ENCODE measurements at regions of chr12 and their contacts with region 1.

Region 1: DNA sequence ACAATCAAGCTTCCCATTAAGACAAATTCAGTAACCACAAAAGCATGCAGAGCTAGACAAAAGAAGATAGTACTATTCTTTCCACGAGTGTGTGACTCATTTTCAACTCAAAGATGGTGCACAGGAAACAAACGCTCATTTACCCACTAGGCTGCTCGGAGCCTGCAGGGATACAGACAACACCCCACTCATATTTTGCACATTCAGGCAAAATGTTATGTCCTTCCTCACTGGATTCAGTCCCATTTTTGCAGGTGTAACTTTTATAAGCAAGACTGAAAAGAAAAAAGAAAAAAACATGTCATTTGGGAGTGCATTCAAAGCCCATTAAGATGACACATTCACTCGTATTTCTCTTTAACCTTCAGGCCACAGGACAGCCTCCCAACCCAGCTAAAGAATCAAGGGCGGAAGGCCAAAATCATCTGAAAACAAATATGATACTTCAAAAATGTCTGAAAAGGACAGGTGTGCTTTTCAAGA is 147.5 kb upstream of the KRR1 start:
- DNase-seq: peak in 1 of 2 experiments; percentile 31
- H3K4me3 ChIP-seq: no peak overlapping the region
- H3K27ac ChIP-seq: no peak overlapping the region
- H3K4me1 ChIP-seq: peaks cover 28% of the 10 kb centered on the region
- H3K27me3 ChIP-seq: no peaks in the 10 kb centered on the region
- CTCF ChIP-seq: no peak

Region 2: DNA sequence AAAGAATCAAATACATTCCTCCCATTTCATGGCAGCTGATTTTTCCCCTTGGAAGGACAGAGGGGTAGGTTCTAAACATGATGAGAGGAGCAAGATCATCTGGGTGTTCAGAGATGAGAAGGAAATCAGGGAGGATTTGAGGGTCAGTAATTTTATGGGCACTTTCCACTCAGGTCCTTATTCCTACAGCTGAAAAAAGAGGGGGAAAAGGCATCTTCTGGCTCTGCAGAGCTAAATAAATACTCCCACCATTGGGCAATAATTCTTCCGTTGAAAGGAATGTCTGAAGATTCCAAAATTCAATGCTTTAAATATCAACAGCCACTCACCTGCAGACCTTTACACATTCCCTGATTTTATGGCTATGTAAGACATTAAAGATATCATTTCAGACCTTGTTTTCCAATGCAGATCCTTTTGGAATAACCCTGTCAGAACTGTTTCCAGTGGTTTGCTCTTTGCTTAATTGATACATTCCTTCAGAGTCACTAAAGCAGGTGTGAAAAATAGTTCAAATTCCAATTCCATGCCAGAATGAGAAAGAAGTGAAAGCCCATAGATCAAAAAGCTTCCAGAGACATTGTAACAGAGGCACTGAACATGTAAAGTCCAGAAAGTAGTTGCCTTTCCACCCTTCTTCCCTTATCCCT is 85.8 kb after region 1 on chr12:
- CTCF ChIA-PET with region 1: no interaction called
- POLR2A ChIA-PET with region 1: interaction called, 10 read pairs
- intact Hi-C with region 1: no loop called
- DNase-seq: peak in 1 of 2 experiments; percentile 45
- H3K4me3 ChIP-seq: no peak overlapping the region
- H3K27ac ChIP-seq: no peak overlapping the region
- H3K4me1 ChIP-seq: no peaks in the 10 kb centered on the region
- H3K27me3 ChIP-seq: no peaks in the 10 kb centered on the region
- CTCF ChIP-seq: no peak

Region 3: DNA sequence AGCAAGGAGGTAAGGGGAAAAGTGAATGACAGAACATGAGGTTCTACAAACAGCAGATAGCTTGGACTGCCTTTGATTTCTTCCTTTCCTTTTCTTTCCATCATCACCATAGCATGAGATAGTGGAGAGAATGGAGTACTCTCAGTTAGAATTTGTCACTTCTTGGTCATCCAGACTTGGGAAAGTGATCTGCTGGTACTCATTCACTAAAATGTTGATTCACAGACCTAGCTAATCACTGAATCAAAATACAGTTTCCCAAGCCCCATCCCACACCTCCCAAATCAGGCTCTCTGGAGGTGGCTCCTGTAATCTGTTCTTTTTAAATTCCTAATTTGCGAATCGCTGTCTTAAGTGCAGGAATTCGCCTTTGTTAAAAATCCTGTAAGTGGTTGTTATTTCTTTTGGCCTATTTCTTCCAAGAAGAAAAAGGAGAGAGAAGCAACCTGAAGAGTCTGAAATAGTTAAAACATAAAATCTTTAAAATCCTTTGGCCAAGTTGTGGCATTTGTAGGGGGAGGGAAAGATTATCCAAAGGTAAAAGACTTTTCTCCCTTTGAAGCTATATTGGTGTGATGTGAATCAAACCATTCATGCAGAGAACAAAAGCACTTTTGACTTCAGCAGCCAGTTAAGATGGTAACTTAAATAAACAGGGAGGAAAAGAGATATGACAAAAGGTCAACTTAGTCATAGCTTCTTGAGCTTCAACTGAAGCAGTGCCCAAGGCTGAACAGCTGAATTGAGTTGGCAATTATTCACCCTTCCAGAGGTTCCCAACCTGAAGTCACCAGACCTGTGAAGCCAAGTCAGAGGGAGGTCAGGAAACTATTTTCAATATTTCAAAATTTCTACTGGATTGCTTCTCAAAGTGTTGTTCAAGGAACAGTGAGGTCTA is 107.6 kb after region 1 on chr12:
- CTCF ChIA-PET with region 1: no interaction called
- POLR2A ChIA-PET with region 1: no interaction called
- intact Hi-C with region 1: loop called (anchors 2 kb)
- DNase-seq: peak; percentile 40 to 93
- H3K4me3 ChIP-seq: no peak overlapping the region
- H3K27ac ChIP-seq: peak overlapping the region; percentile 72
- H3K4me1 ChIP-seq: peaks cover 36% of the 10 kb centered on the region
- H3K27me3 ChIP-seq: no peaks in the 10 kb centered on the region
- CTCF ChIP-seq: no peak

Region 4: GRCh38 chr12:75784591-75784990 is 125.6 kb after region 1 on chr12:
- CTCF ChIA-PET with region 1: no interaction called
- POLR2A ChIA-PET with region 1: no interaction called
- intact Hi-C with region 1: loop called (anchors 5 kb)
- DNase-seq: peak; percentile 83 to 84
- H3K4me3 ChIP-seq: no peak overlapping the region
- H3K27ac ChIP-seq: peak overlapping the region; percentile 21; the same call in 1 of the 2 replicates
- H3K4me1 ChIP-seq: peaks cover 40% of the 10 kb centered on the region
- H3K27me3 ChIP-seq: no peaks in the 10 kb centered on the region
- CTCF ChIP-seq: no peak

Region 5: DNA sequence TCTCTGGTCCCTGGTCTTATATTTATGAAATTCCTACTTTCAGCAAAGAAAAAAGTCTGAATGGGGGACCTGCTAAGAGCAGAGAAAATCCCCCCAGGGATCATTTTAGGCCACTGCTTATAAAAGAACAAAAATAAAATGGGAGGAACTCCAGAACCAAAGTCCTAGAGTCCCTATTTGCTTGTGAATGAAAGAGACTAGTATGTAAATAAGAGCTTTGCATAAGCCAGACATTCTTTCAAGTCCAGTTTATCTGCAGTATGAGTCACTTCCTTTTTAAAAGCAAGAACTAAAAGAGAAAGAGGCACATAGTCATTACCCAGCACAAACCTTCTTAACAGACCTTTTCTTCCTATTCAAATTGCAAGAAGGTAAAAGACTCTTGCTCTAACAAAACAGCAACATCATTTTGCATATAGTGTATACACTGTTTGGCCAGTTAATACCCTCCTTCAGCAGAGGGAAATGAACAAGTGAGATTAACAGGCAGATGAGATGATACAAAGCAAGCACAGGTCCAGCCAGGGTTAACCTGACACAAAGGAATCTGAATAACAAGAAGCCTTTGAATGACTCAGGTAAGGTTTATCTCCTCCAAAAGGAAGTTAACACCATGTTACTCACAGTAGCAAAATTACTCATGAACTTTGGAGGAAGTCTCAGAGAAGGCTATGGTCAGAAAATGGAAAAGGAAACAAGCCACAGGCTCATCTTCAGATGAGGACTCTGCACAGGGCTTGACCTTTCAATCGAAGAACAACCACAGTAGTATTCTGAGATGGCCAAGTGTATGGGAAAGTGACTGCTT is 285.4 kb after region 1 on chr12:
- CTCF ChIA-PET with region 1: no interaction called
- POLR2A ChIA-PET with region 1: no interaction called
- intact Hi-C with region 1: loop called (anchors 2 kb)
- DNase-seq: peak; percentile 43 to 97
- H3K4me3 ChIP-seq: peak overlapping the region; percentile 22; the same call in 1 of the 2 replicates
- H3K27ac ChIP-seq: peak overlapping the region; percentile 99
- H3K4me1 ChIP-seq: peaks cover 53% of the 10 kb centered on the region
- H3K27me3 ChIP-seq: no peaks in the 10 kb centered on the region
- CTCF ChIP-seq: no peak

Region 6: GRCh38 chr12:75954041-75954440 is 295.1 kb after region 1 on chr12:
- CTCF ChIA-PET with region 1: no interaction called
- POLR2A ChIA-PET with region 1: no interaction called
- intact Hi-C with region 1: loop called (anchors 2 kb)
- DNase-seq: peak; percentile 57 to 99
- H3K4me3 ChIP-seq: peak overlapping the region; percentile 19; the same call in 1 of the 2 replicates
- H3K27ac ChIP-seq: peak overlapping the region; percentile 97
- H3K4me1 ChIP-seq: peaks cover 67% of the 10 kb centered on the region
- H3K27me3 ChIP-seq: no peaks in the 10 kb centered on the region
- CTCF ChIP-seq: no peak